ENCODE measurements at regions of chr2 and their contacts with region 1.

Region 1: DNA sequence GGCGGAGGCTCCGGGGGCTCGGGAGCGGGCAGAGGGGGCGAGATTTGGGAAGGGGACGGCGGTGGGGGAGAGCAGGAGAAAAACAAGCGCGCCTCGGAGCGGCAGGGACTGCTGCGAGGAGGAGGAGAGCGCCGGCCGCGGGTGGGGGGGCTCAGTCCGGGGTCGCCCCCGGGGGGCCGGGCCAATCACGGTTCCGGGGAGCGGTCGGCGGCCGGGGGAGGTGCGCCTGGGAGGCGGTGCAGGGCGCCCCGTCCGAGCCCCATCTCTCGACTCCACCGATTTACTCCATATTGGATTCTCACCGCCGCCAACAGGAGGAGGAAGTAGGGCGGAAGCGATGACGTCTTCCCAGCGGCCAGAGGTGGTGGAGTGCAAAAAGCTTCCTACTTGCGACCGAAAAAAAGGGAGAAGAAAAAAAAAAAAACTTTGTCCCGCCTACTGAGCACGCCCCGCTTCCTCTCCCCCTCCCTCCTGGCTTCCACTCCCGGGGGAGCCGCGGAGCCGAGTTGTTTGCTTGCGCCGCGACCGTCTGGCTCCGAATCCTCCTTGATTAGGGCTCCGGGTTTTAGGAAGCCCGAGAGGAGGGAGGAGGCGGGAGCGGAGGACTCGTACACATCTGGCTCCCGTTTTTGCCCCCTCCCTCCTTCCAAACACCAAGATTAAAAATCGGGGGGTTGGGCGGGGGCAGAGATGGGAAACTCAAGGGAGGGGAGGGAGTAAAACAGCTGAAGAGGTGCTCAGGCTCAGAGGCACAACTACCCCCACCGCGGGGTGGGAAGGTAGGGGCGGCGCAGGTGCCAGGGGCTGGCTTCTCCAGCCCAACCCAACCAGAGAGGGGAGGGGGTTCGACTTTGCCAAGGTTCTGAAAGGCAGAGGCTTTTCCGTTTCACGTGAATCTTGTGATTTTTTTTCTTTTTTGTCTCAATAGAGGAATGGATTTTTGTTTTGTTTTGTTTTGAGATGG is at the start of gene SPRED2:
- DNase-seq: peak; percentile 89
- H3K4me3 Mint-ChIP-seq: peak within 1 kb of the TSS; percentile 91
- H3K27ac Mint-ChIP-seq: peak within 1 kb of the TSS; percentile 75
- H3K4me1 Mint-ChIP-seq: peaks cover 11% of the 10 kb centered on the region
- H3K27me3 Mint-ChIP-seq: peaks cover 26% of the 10 kb centered on the region
- total RNA-seq, gene SPRED2: 8.0 to 11.4 TPM

Region 2: DNA sequence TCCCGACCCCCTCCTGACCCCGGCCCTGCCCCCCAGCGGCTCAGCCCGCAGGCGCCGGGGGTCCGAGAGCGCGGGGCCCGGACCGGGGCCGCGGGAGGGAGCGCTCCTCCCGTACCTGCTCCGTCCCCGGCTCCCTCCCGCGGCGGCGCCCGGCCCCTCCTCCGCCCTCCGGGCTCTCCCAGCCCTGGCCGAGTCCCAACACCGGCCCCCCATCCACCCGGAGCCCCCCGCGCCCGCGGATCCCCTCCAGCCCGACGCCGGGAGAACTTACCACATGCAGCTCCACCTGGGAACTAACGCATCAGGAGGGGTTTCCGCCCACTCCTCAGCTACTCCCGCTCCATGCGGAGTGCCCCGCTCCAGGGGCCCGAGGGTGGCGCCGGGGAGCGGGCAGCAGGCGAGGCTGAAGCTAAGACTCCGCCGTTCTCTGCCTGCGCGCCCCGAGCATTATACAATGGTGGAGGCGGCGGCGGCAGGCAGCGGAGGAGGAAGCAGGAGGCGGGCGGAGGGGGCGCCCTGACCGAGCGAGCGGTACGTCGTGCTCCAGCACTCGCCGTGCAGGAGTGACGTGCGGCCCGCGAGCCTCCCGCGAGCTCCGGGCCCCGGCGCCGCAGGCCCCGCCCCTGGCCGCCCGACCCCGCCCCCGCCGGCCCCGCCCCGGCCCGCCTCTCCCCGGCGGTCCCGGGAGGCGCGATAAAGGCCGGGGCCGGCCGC is 779.0 kb before region 1 on chr2 and contains the start of gene SERTAD2:
- CTCF ChIA-PET with region 1: no interaction called
- intact Hi-C with region 1: loop called (anchors 5 kb)
- DNase-seq: peak; percentile 85
- H3K4me3 Mint-ChIP-seq: peak within 1 kb of the TSS; percentile 79
- H3K27ac Mint-ChIP-seq: peak within 1 kb of the TSS; percentile 83
- H3K4me1 Mint-ChIP-seq: peaks cover 74% of the 10 kb centered on the region
- H3K27me3 Mint-ChIP-seq: no peaks in the 10 kb centered on the region
- total RNA-seq, gene SERTAD2: 11.4 to 11.6 TPM

Region 3: DNA sequence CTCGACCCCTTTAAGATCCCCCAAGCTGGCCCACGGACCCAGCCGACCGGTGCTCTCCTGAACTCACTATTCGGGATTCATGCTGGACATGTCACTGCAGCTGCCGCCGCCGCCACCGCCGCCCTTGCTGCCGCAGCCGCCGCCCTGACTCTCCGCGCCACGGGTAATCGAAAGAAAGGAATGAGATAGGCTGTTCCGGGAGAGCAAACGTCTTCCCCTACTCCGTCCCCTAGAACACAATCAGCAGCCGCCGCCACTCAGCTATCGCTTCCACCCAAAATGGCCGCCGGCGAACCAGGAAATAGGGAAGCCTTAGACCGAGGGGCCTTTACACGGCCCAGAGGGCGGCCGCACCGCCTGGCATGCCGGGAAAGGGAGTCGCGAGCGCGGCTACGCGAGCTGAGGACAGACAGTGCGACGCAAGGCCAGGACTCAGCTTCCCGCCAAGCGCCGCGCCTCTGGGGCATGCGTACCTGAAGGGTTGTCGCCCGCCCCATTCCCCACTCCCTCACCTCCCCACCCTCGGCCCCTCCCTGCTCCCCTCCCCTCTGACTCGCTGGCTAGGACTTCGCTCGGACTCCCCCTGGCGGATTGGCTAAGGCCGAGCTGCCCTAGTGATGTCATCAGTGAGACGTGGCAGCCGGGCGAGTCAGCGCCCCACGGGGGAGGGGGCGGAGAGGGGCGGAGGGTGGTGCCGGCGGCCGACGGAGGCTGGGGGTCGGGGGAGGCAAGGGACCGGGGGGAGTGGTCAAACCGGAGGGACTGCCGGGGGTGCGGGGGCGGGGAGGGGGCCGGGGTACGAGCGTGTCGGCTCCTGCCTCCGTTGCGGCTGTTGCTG is 302.5 kb before region 1 on chr2 and contains the start of gene RAB1A:
- CTCF ChIA-PET with region 1: no interaction called
- intact Hi-C with region 1: loop called (anchors 1 kb)
- DNase-seq: peak; percentile 100
- H3K4me3 Mint-ChIP-seq: peak within 1 kb of the TSS; percentile 95
- H3K27ac Mint-ChIP-seq: peak within 1 kb of the TSS; percentile 94
- H3K4me1 Mint-ChIP-seq: peaks cover 35% of the 10 kb centered on the region
- H3K27me3 Mint-ChIP-seq: no peaks in the 10 kb centered on the region
- total RNA-seq, gene RAB1A: 60.8 to 61.3 TPM

Region 4: DNA sequence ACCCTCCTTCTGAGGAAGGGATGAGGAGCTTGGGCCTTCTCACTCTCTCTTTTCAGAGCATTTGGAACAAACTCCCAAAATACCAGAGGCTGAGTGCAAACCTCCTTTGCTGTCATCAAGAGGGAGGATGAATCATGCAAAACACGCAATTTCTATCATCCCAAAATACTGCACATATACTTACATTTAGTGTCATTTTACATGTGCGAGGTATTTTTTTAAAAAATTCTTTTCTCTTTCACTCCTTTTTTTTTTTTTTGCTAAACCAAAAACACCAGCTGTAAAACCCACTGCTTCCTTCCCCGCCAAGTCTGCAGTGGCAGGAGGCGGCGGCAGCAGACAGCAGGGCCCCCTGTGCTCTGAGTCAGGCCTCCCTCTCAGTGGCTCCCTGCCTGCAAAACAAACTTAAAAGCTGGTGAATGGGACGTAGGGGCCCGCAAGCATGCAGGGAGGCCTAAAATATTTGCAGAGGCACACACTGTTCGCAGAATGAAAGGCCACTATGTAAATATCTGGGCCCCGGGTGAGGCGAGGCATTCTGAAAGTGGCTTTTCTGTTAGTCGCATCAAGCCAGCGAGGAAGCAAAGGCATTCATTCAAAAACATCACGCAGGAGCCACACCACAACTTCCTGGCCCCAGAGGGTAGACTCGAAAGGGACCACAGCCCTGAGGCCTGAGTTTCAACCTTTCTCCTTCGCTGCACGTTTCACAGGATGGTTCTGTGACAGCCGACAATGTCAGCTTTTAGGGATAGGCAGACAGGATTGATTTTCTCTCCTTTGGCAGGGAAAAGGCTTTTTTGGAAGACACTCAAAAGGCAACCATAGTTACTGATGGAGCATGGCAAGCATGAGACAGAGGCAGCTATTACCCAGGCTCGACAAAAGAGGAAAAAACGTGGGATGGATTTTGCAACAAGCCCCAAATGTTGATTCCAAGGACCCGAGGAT is 131.5 kb before region 1 on chr2:
- CTCF ChIA-PET with region 1: interaction called, 3 read pairs
- intact Hi-C with region 1: loop called (anchors 1 kb)
- DNase-seq: peak; percentile 85
- H3K4me3 Mint-ChIP-seq: peak overlapping the region; percentile 62
- H3K27ac Mint-ChIP-seq: peak overlapping the region; percentile 82
- H3K4me1 Mint-ChIP-seq: peaks cover 41% of the 10 kb centered on the region
- H3K27me3 Mint-ChIP-seq: no peaks in the 10 kb centered on the region

Region 5: GRCh38 chr2:65357959-65358294 is 74.6 kb before region 1 on chr2:
- CTCF ChIA-PET with region 1: no interaction called
- intact Hi-C with region 1: loop called (anchors 2 kb)
- DNase-seq: no peak
- H3K4me3 Mint-ChIP-seq: no peak overlapping the region
- H3K27ac Mint-ChIP-seq: no peak overlapping the region
- H3K4me1 Mint-ChIP-seq: peaks cover 22% of the 10 kb centered on the region
- H3K27me3 Mint-ChIP-seq: peaks cover 7% of the 10 kb centered on the region

Region 6: DNA sequence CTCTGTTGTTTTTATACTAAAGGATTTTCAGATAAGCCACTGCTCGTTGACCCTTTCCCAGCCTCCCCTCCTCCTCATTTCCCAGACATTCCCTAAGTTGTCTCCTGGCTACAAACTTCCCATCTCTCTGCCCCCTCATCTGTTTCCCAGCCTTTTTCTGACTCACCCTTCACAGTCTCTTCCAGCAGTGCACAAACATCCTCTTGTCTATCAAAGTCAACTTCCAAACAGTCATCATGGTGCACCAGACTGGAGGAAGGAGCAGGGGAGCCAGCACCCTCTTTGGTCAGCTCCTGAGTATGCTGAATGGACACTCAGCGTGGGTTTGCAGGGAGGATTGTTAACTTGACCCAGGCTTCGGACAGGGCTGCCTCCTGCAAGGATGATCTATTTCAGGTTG is 26.5 kb after region 1 on chr2:
- CTCF ChIA-PET with region 1: no interaction called
- intact Hi-C with region 1: no loop called
- DNase-seq: no peak
- H3K4me3 Mint-ChIP-seq: no peak overlapping the region
- H3K27ac Mint-ChIP-seq: no peak overlapping the region
- H3K4me1 Mint-ChIP-seq: no peaks in the 10 kb centered on the region
- H3K27me3 Mint-ChIP-seq: peaks cover 26% of the 10 kb centered on the region

Region 7: GRCh38 chr2:65554765-65555591 is 122.5 kb after region 1 on chr2:
- CTCF ChIA-PET with region 1: interaction called, 3 read pairs
- intact Hi-C with region 1: loop called (anchors 2 kb)
- DNase-seq: no peak
- H3K4me3 Mint-ChIP-seq: no peak overlapping the region
- H3K27ac Mint-ChIP-seq: no peak overlapping the region
- H3K4me1 Mint-ChIP-seq: peaks cover 3% of the 10 kb centered on the region
- H3K27me3 Mint-ChIP-seq: no peaks in the 10 kb centered on the region